ENCODE measurements at regions of chr5 and their contacts with region 1.

Region 1: GRCh38 chr5:126972062-126972895 is 58.1 kb downstream of the MARCHF3 start:
- DNase-seq: peak; percentile 85
- ATAC-seq: peak; percentile 78
- H3K4me3 ChIP-seq: peak overlapping the region in 3 of 5 experiments; percentile 3 to 53 (median 39)
- H3K4me3 Mint-ChIP-seq: peak overlapping the region; percentile 91
- H3K27ac ChIP-seq: peak overlapping the region; percentile 70 to 97
- H3K27ac Mint-ChIP-seq: peak overlapping the region; percentile 99
- H3K4me1 ChIP-seq: peaks cover 72 to 73% of the 10 kb centered on the region in 2 donors
- H3K4me1 Mint-ChIP-seq: peaks cover 74% of the 10 kb centered on the region
- H3K27me3 ChIP-seq: no peaks in the 10 kb centered on the region
- H3K27me3 Mint-ChIP-seq: no peaks in the 10 kb centered on the region
- CTCF ChIP-seq: no peak

Region 2: DNA sequence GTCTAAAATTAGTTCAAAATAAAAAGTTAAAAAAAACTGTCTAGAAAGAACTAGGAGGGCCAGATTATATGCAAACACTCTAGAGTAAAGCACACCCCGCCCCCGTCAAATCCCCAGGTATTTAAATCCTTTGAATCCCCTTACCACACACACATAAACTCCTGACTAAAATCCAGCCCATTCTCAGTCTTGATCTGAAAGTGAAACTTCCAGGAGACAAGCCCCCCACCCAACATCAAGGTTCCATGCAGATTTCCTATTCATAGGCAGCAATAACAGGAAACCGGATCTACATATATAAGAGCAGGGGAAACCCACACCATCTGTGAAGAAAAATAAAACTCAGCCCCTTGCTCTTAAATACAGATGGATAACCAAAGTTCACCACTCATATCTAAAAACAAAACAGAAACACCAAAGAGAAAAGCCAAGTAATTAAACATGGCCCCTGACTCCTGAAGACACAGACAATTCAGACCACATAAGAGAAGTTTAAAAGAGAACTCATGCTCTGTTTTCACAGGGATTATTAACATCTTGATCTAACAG is 15.8 kb after region 1 on chr5:
- CTCF ChIA-PET with region 1: interaction called, 3 read pairs
- POLR2A ChIA-PET with region 1: interaction called, 8 read pairs
- intact Hi-C with region 1: loop called (anchors 1 kb)
- DNase-seq: peak; percentile 85
- ATAC-seq: peak; percentile 87
- H3K4me3 ChIP-seq: peak overlapping the region; percentile 27 to 52 (median 42)
- H3K4me3 Mint-ChIP-seq: peak overlapping the region; percentile 88
- H3K27ac ChIP-seq: peak overlapping the region; percentile 91 to 94
- H3K27ac Mint-ChIP-seq: peak overlapping the region; percentile 97
- H3K4me1 ChIP-seq: peaks cover 71% of the 10 kb centered on the region in 2 donors
- H3K4me1 Mint-ChIP-seq: peaks cover 80% of the 10 kb centered on the region
- H3K27me3 ChIP-seq: no peaks in the 10 kb centered on the region
- H3K27me3 Mint-ChIP-seq: no peaks in the 10 kb centered on the region
- CTCF ChIP-seq: no peak